CD8-positive, alpha-beta memory T cell (primary cell): ENCODE measurements at regions of chr14 and their contacts with region 1.

Region 1: DNA sequence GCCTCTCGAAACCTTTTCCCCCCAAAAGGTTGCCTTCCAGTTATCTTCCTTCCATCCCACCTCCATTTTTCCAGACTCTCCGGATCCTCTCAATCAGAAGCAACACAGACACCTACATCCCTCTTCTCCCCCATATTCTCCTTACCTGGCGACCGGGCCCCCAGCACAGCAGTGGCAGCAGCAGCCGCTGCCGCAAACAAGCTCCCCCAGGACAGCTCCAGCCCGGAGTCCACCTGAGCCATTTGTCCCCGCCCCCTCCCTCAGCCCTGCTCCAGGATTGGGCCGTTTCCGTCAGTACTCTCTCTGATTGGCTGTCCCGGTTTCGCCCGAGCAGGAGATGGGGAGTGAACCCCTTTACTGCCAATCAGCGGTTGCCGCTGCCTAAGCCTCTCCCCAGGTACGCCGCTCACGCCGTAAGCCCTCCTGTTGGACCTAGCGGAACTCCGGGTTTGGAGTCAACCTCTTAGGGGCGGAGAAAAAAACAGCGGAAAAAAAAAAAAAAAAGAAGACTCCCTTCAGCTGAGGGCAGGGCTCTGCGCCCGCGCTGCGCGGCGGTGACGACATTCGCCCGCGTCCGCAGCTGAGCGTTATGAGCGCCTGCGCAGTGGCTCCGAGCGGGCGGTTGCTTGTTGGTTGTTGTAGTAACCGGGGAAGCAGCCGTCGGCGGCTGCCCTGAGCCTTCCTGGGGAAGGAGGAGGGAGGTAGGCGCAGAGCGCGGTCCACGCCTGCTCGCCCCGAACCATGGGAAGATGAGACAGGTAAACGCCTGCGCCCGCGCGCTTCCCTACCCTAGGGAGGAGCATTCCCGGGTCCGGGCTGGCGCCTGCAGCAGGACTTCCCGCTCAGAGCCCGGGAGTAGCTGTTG is at the starts of genes ERG28 and TTLL5:
- DNase-seq: peak; percentile 92 to 97 (median 96)
- H3K4me3 ChIP-seq: peak within 1 kb of the TSS; percentile 89
- H3K4me3 Mint-ChIP-seq: peak within 1 kb of the TSS; percentile 89 to 98 (median 95)
- H3K27ac ChIP-seq: peak within 1 kb of the TSS; percentile 97
- H3K27ac Mint-ChIP-seq: peak within 1 kb of the TSS; percentile 89 to 100 (median 96)
- H3K4me1 ChIP-seq: no peaks in the 10 kb centered on the region
- H3K4me1 Mint-ChIP-seq: peaks cover 22 to 53% (median 41%) of the 10 kb centered on the region in 3 donors
- H3K27me3 ChIP-seq: no peaks in the 10 kb centered on the region
- H3K27me3 Mint-ChIP-seq: peaks cover 0 to 4% of the 10 kb centered on the region in 2 donors
- total RNA-seq, gene ERG28: 18.5 to 18.8 TPM
- total RNA-seq, gene TTLL5: 33.7 to 35.1 TPM

Region 2: GRCh38 chr14:75107186-75107585 is 553.7 kb before region 1 on chr14:
- CTCF ChIA-PET with region 1: no interaction called
- POLR2A ChIA-PET with region 1: interaction called, 10 read pairs
- DNase-seq: no peak
- H3K4me3 ChIP-seq: no peak overlapping the region
- H3K4me3 Mint-ChIP-seq: no peak overlapping the region
- H3K27ac ChIP-seq: no peak overlapping the region
- H3K27ac Mint-ChIP-seq: peak overlapping the region in 1 of 8 donors; percentile 2
- H3K4me1 ChIP-seq: no peaks in the 10 kb centered on the region
- H3K4me1 Mint-ChIP-seq: peaks cover 0 to 8% (median 3%) of the 10 kb centered on the region in 3 donors
- H3K27me3 ChIP-seq: no peaks in the 10 kb centered on the region
- H3K27me3 Mint-ChIP-seq: no peaks in the 10 kb centered on the region

Region 3: DNA sequence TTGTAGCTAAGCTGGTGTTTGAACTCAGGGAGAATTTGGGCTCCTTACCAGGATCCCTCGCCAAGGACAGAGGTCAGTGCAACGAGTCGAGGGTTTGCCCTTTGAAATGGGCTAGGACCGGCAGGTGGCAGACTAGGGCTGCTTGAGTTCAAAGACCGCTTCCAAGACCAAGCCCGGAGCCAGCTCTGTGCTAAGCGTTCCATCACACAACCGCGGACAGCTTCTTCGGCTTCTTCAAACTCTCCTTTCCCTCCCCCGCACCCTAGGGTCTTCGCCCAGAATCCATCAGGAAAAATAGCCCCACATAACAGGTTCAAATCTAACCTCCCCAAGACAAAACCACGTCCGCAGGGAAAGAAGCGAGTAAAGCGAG is 83.1 kb before region 1 on chr14:
- CTCF ChIA-PET with region 1: interaction called, 178 read pairs
- POLR2A ChIA-PET with region 1: no interaction called
- DNase-seq: peak; percentile 52 to 78 (median 54)
- H3K4me3 ChIP-seq: peak overlapping the region; percentile 66
- H3K4me3 Mint-ChIP-seq: peak overlapping the region; percentile 89 to 99 (median 95)
- H3K27ac ChIP-seq: peak overlapping the region; percentile 21
- H3K27ac Mint-ChIP-seq: peak overlapping the region; percentile 5 to 96 (median 88)
- H3K4me1 ChIP-seq: peaks cover 9% of the 10 kb centered on the region
- H3K4me1 Mint-ChIP-seq: peaks cover 9 to 20% (median 9%) of the 10 kb centered on the region in 3 donors
- H3K27me3 ChIP-seq: no peaks in the 10 kb centered on the region
- H3K27me3 Mint-ChIP-seq: no peaks in the 10 kb centered on the region